Activated T-helper 2 cell treated with anti-CD3 and anti-CD28 coated beads, Interferon-gamma antibody, Interleukin-2, Interleukin-4, amounts not matched to agents 10 μg/mL and 5 μg/mL and 100 μg/mL, durations not matched to agents 14 hours and 24 hours and 36 hours (primary cell): ENCODE measurements at regions of chr22 and their contacts with region 1.

Region 1: DNA sequence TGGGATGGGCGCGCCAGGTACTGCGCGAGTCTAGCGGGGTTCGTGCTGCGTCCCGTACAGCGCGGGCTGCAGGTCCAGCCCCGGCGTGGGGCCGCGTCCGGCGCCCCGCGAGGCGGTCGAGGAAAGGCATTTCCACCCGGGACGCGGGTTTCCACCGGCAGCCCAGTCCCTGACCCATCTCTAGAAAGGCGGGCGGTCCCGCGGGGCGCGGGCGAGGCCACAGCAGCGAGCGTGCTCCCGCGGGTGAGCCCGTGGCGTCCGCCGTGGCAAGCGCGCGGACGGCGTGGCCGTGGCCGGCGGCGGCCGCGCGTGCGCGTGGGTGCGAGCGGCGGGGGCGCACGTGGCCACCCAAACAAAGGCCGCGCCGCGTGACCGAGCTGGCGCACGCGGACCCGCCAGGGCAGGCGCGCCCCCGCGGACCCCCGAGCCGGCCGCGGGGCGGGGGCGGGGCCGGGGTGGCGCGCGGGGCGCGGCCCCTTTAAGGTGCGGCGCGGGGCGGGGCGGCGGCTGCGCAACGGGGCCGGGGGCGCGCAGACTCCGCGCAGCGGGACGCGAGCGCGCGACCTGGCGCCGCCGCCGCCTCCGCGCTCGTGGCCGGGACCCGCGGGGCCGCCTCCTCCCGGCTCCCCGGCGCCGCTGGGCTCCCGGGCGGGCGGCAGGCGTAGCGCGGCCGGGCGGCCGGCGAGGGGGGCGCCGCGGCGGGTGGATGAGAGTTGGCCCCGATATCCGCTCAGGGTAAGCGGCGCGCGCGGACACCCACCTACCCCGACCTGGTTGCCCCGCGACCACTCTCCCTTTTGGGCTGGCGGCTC is 39.3 kb upstream of the CELSR1 start:
- DNase-seq: peak; percentile 52
- H3K4me3 Mint-ChIP-seq: peak overlapping the region; percentile 82
- H3K27ac Mint-ChIP-seq: peak overlapping the region; percentile 82
- H3K4me1 Mint-ChIP-seq: peaks cover 43% of the 10 kb centered on the region
- H3K27me3 Mint-ChIP-seq: no peaks in the 10 kb centered on the region

Region 2: GRCh38 chr22:46613606-46614021 is 36.9 kb after region 1 on chr22:
- intact Hi-C with region 1: loop called (anchors 5 kb)
- DNase-seq: peak; percentile 12
- H3K4me3 Mint-ChIP-seq: peak overlapping the region; percentile 80
- H3K27ac Mint-ChIP-seq: peak overlapping the region; percentile 89
- H3K4me1 Mint-ChIP-seq: peaks cover 27% of the 10 kb centered on the region
- H3K27me3 Mint-ChIP-seq: no peaks in the 10 kb centered on the region

Region 3: DNA sequence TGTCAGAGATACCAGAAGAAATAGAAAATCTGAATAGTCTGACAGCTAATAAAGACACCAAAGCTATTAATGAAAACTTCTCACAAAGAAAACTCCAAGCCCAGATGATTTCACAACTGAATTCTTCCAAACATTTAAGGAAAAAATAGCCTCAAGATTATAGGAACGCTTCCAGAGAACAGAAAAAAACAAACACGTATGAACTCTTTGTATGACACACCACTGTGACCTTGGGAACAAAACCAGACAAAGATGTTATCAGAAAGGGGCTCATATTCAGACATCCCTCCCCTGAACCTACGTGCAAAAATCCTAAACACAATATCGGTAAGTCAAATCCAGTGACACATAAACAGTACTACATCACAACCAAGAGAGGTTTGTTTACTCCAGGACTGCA is 137.8 kb after region 1 on chr22:
- intact Hi-C with region 1: no loop called
- DNase-seq: no peak
- H3K4me3 Mint-ChIP-seq: no peak overlapping the region
- H3K27ac Mint-ChIP-seq: no peak overlapping the region
- H3K4me1 Mint-ChIP-seq: peaks cover 4% of the 10 kb centered on the region
- H3K27me3 Mint-ChIP-seq: no peaks in the 10 kb centered on the region

Region 4: DNA sequence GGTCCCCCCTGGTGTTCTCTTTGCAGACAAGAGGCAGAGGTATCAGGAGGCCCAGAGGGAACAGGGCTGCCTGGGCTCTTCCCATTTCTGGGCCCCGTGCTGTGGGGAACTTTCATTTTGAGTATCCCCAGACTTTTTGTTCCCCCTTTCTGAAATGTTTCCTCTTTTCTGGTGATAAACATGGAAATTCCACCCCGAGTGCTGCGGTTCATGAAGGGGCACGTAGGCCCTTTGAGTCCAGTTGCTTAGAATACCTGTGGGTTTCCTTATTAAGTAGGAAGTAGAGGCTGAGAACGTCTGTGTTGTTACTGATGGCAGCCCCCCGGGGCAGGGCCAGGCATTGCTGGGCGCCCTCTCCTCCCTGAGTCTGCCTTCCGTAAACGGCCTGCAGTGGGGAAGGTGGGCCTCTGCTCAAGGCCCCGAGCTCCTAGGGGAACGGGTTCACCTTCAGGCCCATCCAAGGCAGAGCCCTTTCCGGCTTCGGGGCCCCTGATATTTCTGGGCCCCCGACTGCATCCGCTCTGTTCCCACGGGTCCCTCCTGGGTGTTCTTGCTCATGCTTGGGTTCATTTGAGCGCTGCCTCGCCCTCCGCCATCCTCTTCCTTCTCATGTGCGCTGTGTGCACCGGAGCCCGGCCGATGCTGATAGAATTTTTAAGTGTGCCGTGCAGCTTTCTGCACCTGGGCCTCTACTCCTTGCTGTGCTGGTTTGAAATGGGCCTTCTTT is 197.7 kb after region 1 on chr22:
- intact Hi-C with region 1: no loop called
- DNase-seq: no peak
- H3K4me3 Mint-ChIP-seq: peak overlapping the region; percentile 46
- H3K27ac Mint-ChIP-seq: peak overlapping the region; percentile 86
- H3K4me1 Mint-ChIP-seq: peaks cover 53% of the 10 kb centered on the region
- H3K27me3 Mint-ChIP-seq: no peaks in the 10 kb centered on the region

Region 5: GRCh38 chr22:46815896-46816731 is 239.4 kb after region 1 on chr22:
- intact Hi-C with region 1: no loop called
- DNase-seq: no peak
- H3K4me3 Mint-ChIP-seq: no peak overlapping the region
- H3K27ac Mint-ChIP-seq: no peak overlapping the region
- H3K4me1 Mint-ChIP-seq: peaks cover 18% of the 10 kb centered on the region
- H3K27me3 Mint-ChIP-seq: no peaks in the 10 kb centered on the region

Region 6: GRCh38 chr22:46974077-46974476 is 397.3 kb after region 1 on chr22:
- intact Hi-C with region 1: no loop called
- DNase-seq: no peak
- H3K4me3 Mint-ChIP-seq: no peak overlapping the region
- H3K27ac Mint-ChIP-seq: no peak overlapping the region
- H3K4me1 Mint-ChIP-seq: peaks cover 15% of the 10 kb centered on the region
- H3K27me3 Mint-ChIP-seq: no peaks in the 10 kb centered on the region